Heart left ventricle (tissue), 16 donors: ENCODE measurements at regions of chr1 and their contacts with region 1.

Region 1: DNA sequence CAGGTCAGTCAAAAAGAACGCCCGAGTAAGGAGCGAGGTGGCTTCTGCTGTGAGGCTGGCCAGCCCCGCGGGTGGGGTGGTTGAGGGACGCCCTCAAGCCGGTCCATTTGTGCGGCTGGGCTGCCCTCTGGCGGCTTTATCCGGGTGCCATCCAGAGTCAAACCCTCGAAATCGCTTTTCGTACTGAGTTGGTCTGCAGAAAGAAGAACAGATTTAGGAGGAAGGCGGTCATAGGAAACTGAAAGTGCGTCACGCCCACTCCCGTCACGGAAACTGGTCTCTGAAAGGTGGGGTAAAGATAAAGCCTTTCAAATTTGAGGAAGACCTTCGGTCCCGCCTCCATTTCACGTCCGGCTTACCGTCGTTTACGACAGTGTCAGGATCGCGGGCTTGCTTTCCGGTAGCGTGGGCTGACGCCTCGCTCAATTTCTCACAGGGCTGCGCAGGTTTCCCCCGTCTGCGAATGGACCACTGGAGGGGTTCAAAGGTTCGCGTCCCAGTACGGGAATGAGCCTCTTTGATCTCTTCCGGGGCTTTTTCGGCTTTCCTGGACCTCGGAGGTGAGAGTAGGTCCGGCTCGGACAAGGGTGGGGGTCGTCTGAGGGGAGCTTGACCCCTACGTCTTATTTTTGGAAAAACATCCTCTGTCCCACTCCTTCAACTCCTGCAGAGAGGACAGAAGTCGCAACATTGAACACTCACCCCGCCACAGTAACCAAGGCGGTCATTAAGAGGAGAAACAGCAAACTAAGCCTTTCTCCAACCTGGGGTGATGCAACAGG is at the start of gene HAX1:
- DNase-seq: peak; percentile 91 to 95 (median 94)
- ATAC-seq: peak; percentile 90 to 95 (median 93)
- H3K4me3 ChIP-seq: peak within 1 kb of the TSS; percentile 45 to 99 (median 82)
- H3K27ac ChIP-seq: peak within 1 kb of the TSS; percentile 69 to 97 (median 88)
- H3K4me1 ChIP-seq: peaks cover 0 to 22% (median 12%) of the 10 kb centered on the region in 12 donors
- H3K27me3 ChIP-seq: no peaks in the 10 kb centered on the region
- CTCF ChIP-seq: peak; percentile 61 to 96 (median 80)
- POLR2A ChIP-seq: peak in 1 of 2 donors; percentile 63
- total RNA-seq, gene HAX1: 127 to 230 (median 165) TPM

Region 2: DNA sequence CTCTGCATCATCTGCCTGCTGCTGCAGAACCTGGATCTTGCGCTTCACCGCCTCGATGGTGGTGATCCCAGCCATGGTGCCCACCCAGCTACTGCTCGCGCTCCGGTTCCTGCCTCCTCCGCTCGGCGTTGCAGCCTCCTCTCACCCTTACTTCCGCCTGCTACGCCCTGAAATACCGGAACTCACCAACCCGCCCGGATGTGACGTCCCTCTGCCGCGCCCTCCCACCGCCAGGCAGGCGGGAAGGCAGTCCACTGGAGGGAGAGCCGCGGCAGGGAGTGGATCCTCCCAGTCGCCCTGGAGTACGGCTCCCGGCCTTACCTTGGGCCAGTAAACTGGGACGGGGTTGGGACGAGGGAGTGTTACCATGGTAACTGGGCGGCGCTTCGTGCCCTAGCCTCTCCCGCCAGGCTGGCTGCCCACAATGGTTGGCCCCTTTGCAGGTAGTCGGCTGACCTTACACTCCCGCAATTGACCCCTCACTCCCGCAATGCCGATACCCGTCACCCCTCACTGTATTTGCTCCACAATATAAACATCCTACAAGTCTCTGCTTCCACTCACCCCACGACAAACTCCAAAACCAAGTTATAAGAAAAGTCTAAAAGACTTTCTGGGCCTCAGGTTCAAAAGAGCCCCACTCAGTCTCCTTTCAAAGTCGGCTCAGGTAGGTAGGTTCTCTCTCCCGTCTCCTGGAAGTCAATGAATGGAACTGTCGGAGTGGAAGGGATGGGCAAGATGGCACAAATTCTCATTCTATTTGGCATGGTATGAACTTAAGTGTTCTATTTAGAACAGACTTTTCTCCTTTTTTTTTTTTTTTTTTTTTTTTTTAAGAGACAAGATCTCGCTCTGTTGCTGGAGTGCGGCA is 89.1 kb before region 1 on chr1:
- intact Hi-C with region 1: loop called in 1 of 10 experiments (anchors 5 kb)
- DNase-seq: peak; percentile 95 to 97 (median 96)
- ATAC-seq: peak; percentile 95 to 98 (median 97)
- H3K4me3 ChIP-seq: peak overlapping the region; percentile 84 to 100 (median 96)
- H3K27ac ChIP-seq: peak overlapping the region; percentile 19 to 98 (median 94)
- H3K4me1 ChIP-seq: peaks cover 8 to 47% (median 42%) of the 10 kb centered on the region in 12 donors
- H3K27me3 ChIP-seq: no peaks in the 10 kb centered on the region
- CTCF ChIP-seq: peak in 3 of 12 donors; percentile 16 to 24 (median 18)
- POLR2A ChIP-seq: peak; percentile 18 to 97

Region 3: DNA sequence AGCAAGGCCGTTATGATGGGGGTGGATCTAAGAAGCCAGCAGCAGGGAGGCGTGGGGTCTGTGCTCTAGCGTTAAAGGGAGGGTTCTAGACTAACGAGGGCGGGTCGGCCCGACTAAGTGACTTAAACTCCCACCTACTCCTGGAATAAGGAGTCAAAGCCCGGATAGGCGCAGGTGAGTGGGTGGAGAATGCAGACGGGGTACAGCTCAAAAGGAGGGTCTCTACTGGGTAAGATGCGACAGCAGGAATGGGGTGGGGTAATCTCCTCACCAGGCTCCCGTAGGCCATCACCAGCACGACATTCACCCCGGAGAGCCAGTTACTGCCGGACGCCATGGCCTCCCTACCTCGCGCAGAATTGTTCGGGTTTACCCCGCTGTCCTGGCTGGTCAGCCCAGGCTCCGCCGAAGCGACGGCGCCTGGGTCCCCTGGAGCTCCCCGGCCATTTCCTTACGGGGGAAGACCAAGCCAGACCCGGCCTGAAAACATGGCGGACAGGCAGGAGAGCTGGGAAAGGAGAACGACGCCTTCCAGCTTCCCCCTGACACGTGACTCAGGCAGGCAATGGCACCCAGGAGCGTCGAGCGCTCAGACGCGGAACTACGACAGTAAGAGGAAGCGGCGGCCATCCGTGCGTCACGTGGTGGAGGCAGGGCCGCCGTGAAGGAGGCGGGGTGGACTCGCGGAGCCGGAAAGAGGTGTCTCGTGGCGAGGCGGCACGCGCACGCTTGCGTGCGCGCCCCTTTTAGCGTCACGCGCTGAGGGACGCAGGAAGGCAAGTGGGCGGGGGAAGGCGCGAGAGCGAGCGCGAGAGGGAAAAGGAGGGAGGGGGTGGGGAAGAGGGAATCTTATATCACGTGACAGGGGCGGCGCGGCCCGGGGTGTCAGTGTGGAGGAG is 52.1 kb before region 1 on chr1 and contains the start of gene UBAP2L:
- intact Hi-C with region 1: loop called in 1 of 10 experiments (anchors 2 kb)
- DNase-seq: peak; percentile 99 to 100 (median 99)
- ATAC-seq: peak; percentile 97 to 99 (median 98)
- H3K4me3 ChIP-seq: peak within 1 kb of the TSS; percentile 65 to 97 (median 82)
- H3K27ac ChIP-seq: peak within 1 kb of the TSS; percentile 95 to 100 (median 98)
- H3K4me1 ChIP-seq: peaks cover 7 to 61% (median 51%) of the 10 kb centered on the region in 12 donors
- H3K27me3 ChIP-seq: no peaks in the 10 kb centered on the region
- CTCF ChIP-seq: peak in 1 of 12 donors; percentile 3
- POLR2A ChIP-seq: peak; percentile 19 to 61
- total RNA-seq, gene UBAP2L: 57.4 to 142 (median 100) TPM

Region 4: DNA sequence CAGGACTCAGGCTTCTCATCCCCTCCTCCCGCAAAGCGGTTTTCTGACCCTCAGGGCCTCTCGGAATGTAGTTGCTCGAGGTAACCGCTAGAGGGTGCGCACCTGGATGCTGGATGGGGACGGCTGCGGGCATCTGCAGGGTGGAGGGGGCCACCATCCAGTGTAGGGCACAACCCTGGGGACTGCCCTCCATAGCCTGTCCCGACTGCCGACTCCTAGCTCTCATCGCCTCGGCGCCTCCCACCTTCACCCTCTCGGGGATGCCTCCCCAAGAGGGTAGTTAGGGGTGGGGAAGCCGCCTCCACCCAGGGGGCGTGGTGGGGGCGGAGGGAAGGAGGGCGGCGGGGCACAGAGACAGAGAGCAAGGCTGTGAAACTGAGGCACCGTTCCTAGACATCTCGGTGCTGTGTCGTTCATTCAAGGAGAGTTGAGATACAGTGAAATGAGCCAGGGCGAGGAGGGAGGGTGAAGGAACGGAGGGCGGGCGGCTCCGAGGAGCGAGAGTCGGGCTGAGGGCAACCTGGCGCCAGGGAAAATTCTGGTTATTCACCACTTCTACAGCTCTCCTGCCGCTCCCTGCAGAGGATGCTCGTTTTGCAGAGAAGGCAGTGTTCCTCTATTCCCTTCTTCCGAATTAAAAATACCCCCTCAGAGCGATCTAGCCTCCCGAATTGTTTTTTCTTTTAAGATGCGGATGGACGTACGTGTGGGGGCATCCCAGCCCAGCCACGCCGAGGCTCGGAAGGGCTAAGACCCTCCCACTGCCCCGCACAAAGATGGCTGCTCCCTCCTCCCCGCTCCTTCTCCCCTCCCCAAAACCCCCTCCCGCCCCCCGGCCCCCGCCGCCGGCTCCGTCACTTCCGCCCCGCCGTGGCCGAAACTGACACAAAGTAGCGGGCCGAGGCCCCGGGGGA is 52.5 kb after region 1 on chr1 and contains the start of gene ATP8B2:
- intact Hi-C with region 1: loop called in 6 of 10 experiments (anchors 2 to 10 kb)
- DNase-seq: peak; percentile 70 to 86 (median 77)
- ATAC-seq: peak; percentile 43 to 63 (median 52)
- H3K4me3 ChIP-seq: peak within 1 kb of the TSS; percentile 70 to 99 (median 75)
- H3K27ac ChIP-seq: peak within 1 kb of the TSS; percentile 58 to 94 (median 88)
- H3K4me1 ChIP-seq: peaks cover 0 to 61% (median 36%) of the 10 kb centered on the region in 12 donors
- H3K27me3 ChIP-seq: peaks cover 0 to 3% (median 0%) of the 10 kb centered on the region in 9 donors
- CTCF ChIP-seq: peak; percentile 78 to 96 (median 92)
- POLR2A ChIP-seq: no peak
- total RNA-seq, gene ATP8B2: 9.4 to 45.0 (median 15.5) TPM

Region 5: DNA sequence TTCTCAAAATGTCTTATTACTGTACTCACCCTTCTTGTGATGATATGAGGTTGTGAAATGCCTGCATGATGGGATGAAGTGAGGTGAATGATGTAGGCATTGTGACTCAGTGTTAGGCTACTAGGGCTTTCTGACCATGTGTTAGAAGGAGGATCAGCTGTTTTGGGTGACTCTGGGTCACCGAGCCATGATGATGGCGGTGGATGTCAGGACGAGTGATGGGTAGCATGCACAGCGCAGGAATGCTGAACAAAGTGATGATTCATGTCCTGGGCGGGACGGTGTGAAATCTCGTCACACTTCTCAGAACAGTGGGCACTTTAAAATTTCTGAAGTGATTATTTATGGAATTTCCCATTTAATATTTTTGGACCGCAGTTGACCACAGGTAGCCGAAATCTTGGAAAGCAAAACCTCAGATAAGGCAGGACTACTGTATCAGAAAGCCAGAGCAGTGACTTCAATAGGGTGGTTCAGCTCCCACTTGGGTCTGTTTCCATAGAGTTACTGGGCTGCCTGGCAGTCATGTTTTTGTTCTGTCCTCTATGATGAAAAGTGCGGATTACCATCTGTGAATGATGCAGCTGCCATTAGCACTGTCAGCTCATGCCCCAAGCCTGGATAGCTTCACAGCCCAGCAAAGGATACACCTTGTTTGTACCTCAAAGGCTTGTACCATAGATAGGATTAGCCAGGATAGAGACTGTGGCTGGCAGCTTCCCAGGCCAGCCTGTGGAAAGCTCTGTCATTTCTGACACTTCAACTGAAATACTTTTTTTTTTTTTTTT is 159.4 kb after region 1 on chr1:
- intact Hi-C with region 1: no loop called
- DNase-seq: peak in 2 of 5 donors; percentile 30 to 51
- ATAC-seq: peak in 3 of 4 donors; percentile 3 to 27 (median 15)
- H3K4me3 ChIP-seq: no peak overlapping the region
- H3K27ac ChIP-seq: peak overlapping the region in 5 of 12 donors; percentile 10 to 96 (median 45)
- H3K4me1 ChIP-seq: peaks cover 0 to 86% (median 64%) of the 10 kb centered on the region in 12 donors
- H3K27me3 ChIP-seq: no peaks in the 10 kb centered on the region
- CTCF ChIP-seq: no peak
- POLR2A ChIP-seq: no peak